ENCODE measurements at regions of chr16 and their contacts with region 1.

Region 1: GRCh38 chr16:87435372-87436224 is 43.5 kb downstream of the MAP1LC3B start:
- DNase-seq: peak; percentile 29
- H3K4me3 Mint-ChIP-seq: peak overlapping the region; percentile 54
- H3K27ac Mint-ChIP-seq: peak overlapping the region; percentile 86
- H3K4me1 Mint-ChIP-seq: peaks cover 32% of the 10 kb centered on the region
- H3K27me3 Mint-ChIP-seq: no peaks in the 10 kb centered on the region

Region 2: GRCh38 chr16:87017365-87018012 is 418.1 kb before region 1 on chr16:
- CTCF ChIA-PET with region 1: no interaction called
- intact Hi-C with region 1: no loop called
- DNase-seq: no peak
- H3K4me3 Mint-ChIP-seq: no peak overlapping the region
- H3K27ac Mint-ChIP-seq: no peak overlapping the region
- H3K4me1 Mint-ChIP-seq: no peaks in the 10 kb centered on the region
- H3K27me3 Mint-ChIP-seq: peaks cover 32% of the 10 kb centered on the region

Region 3: GRCh38 chr16:87464691-87465300 is 29.2 kb after region 1 on chr16:
- CTCF ChIA-PET with region 1: interaction called, 3 read pairs
- intact Hi-C with region 1: loop called (anchors 1 kb)
- DNase-seq: peak; percentile 74
- H3K4me3 Mint-ChIP-seq: peak overlapping the region; percentile 69
- H3K27ac Mint-ChIP-seq: peak overlapping the region; percentile 92
- H3K4me1 Mint-ChIP-seq: peaks cover 51% of the 10 kb centered on the region
- H3K27me3 Mint-ChIP-seq: no peaks in the 10 kb centered on the region